Activated naive CD4-positive, alpha-beta T cell treated with anti-CD3 and anti-CD28 coated beads for 36 hours (primary cell): ENCODE measurements at regions of chr1 and their contacts with region 1.

Region 1: GRCh38 chr1:91754348-91754747 is 131.6 kb downstream of the TGFBR3 start:
- DNase-seq: peak; percentile 81
- H3K4me3 Mint-ChIP-seq: no peak overlapping the region
- H3K27ac Mint-ChIP-seq: peak overlapping the region; percentile 70
- H3K4me1 Mint-ChIP-seq: peaks cover 37% of the 10 kb centered on the region
- H3K27me3 Mint-ChIP-seq: peaks cover 4% of the 10 kb centered on the region

Region 2: DNA sequence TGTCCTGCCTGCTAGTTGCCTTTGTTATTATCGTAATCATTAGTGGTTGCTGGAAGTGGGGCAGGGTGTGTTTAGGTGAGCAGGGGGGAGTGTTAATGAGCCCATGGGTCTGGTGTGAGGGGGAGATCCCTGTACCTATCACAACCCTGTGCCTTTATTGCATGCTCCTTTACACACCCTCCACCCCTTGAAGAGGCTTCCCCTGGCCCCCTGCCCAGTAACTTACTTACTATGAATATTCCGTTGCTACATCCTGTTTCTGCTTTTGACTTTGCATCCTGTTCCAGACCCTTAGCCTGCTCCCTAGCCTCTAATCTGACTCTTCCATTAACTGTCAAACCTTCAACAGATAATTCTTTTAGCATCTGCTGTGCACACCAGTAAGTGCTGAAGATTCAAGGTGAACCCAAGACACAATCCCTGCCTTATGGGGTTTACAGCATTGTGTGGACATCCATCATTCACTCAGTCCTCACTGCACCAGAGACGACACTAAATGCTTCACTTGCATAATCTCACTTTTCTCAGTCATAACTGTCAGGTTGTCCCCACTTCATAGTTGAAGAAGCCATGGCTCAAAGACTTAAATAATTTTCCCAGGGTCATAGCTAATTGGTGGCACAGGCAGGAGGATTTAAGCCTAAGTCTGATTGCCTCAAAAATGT is 205.8 kb before region 1 on chr1:
- CTCF ChIA-PET with region 1: no interaction called
- intact Hi-C with region 1: loop called (anchors 2 kb)
- DNase-seq: peak; percentile 58
- H3K4me3 Mint-ChIP-seq: no peak overlapping the region
- H3K27ac Mint-ChIP-seq: peak overlapping the region; percentile 32
- H3K4me1 Mint-ChIP-seq: peaks cover 46% of the 10 kb centered on the region
- H3K27me3 Mint-ChIP-seq: no peaks in the 10 kb centered on the region

Region 3: GRCh38 chr1:91684481-91685196 is 69.7 kb before region 1 on chr1:
- CTCF ChIA-PET with region 1: no interaction called
- intact Hi-C with region 1: loop called (anchors 1 kb)
- DNase-seq: peak; percentile 66
- H3K4me3 Mint-ChIP-seq: peak overlapping the region; percentile 40
- H3K27ac Mint-ChIP-seq: peak overlapping the region; percentile 76
- H3K4me1 Mint-ChIP-seq: peaks cover 20% of the 10 kb centered on the region
- H3K27me3 Mint-ChIP-seq: no peaks in the 10 kb centered on the region

Region 4: GRCh38 chr1:91732291-91733107 is 21.8 kb before region 1 on chr1:
- CTCF ChIA-PET with region 1: no interaction called
- intact Hi-C with region 1: loop called (anchors 1 kb)
- DNase-seq: peak; percentile 24
- H3K4me3 Mint-ChIP-seq: no peak overlapping the region
- H3K27ac Mint-ChIP-seq: peak overlapping the region; percentile 64
- H3K4me1 Mint-ChIP-seq: peaks cover 30% of the 10 kb centered on the region
- H3K27me3 Mint-ChIP-seq: no peaks in the 10 kb centered on the region

Region 5: DNA sequence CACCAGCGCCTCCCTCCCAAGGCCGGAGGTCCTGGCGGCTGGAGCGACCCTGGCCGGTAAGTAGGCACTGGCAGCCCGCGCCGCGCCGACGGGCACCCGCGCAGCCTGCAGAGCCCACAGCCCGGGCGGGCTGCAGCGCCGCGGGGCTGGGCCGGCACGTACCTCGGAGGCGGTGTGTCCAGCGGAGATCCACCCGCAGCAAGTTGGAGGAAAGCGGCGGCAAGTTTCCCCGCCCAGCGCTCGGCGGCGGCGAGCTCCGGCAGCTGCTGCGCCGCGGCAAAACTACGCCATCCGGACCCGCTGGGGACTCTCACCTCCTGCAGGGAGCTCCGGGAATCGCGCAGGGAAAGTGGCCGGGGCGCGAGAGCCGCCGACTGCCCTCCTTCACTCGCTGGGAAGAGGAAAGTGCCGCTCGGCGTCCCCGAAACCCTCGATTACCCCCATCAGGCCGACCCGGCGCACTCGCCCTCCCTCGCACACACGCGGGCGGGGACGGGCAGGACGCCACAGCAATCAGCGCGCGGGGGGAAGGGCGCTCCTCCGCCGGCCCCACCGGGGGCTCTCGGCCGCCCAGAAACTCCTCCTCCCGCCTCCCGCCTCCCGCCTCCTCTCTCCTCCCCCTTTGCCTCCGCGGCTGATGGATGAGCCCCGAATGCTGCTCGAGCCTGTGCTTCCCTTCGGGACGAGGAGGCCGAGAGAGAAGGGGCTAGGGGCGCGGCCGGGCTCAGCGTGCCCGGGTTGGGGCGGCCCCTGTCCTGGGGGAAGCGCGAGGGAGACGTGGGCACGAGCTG is 131.6 kb after region 1 on chr1 and contains the start of gene TGFBR3:
- CTCF ChIA-PET with region 1: no interaction called
- intact Hi-C with region 1: loop called (anchors 1 kb)
- DNase-seq: peak; percentile 74
- H3K4me3 Mint-ChIP-seq: peak within 1 kb of the TSS; percentile 85
- H3K27ac Mint-ChIP-seq: peak within 1 kb of the TSS; percentile 46
- H3K4me1 Mint-ChIP-seq: peaks cover 33% of the 10 kb centered on the region
- H3K27me3 Mint-ChIP-seq: peaks cover 15% of the 10 kb centered on the region
- total RNA-seq, gene TGFBR3: 3.2 to 3.3 TPM